ENCODE measurements at regions of chr17 and their contacts with region 1.

Region 1: DNA sequence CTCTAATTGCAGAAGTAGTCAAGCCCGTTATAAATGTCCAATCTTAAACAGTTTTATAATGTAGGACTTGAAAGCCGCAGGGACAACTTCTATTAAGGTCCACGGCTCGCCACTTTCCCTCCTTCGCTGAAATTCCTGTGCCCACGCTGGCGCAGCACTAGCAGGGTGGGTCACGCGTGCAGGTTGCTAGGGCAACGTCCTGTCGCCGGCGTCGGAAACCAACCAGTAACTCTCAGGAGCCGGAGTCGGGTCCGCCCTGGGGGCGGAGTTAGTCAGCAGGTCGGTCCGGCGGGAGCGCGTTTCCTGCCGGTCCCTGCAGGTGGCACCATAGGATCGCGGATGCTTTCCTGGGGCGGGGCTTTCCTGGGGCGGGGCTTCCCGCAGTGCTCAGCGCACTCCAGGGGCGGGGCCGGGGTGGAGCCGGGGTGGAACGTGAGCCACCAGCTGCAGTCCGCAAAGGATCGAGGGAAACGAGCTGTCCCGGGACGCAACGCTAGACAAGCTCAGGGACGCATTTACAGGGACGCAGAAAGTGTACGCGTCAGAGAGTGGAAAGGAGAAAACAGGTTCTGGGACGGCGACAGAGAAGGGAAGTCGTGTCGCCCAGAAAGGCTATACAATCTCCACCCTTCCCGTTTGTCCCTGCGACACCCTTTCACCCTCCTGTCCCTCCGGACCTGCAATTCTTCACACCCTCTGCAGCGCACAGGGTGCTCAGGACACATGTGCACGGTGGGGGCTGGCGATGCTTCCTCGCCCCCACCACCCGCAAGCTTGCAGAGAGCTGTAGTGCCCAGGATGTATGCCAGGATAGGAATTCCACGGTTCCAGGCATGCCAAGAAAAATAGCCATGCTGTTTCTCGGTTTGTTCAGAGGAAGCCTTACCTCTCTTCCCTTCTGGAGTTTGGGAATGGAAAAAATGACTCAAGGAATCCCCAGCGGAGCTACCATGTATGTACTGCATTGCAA is 12.4 kb downstream of the COPZ2 start:
- DNase-seq: peak; percentile 95 to 98
- ATAC-seq: peak; percentile 71 to 82
- H3K4me3 ChIP-seq: peak overlapping the region; percentile 43
- H3K27ac ChIP-seq: peak overlapping the region; percentile 71 to 88
- H3K4me1 ChIP-seq: peaks cover 27% of the 10 kb centered on the region
- CTCF ChIP-seq: peak; percentile 96
- EP300 ChIP-seq: no peak
- POLR2A ChIP-seq: peak; percentile 87
- RAD21 ChIP-seq: peak; percentile 96 to 100

Region 2: DNA sequence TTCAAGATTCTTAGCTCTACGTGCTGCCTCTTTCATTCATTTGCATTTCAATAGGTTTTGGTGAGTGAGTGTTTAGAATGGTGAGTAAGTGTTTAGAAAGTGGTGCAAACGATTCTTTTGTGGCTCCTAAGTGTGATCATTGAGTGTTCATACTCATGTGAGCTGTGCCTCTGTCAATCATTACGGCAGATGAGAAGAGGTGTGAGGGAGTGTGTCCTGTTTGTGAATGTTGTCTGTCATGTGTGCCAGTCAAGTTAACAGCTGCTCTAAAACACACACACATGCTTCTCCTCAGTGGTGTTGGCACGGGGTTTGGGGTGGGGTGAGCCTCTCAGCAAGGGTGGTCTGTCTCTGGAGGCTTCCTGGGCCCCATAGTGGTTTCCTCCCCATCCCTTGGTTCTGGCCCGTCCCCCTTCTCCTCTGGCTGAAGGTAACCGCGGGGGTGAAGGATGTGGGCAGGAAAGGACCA is 804.7 kb before region 1 on chr17:
- CTCF ChIA-PET with region 1: no interaction called
- POLR2A ChIA-PET with region 1: no interaction called
- DNase-seq: no peak
- ATAC-seq: no peak; a peak in 1 of 6 replicates
- H3K4me3 ChIP-seq: no peak overlapping the region
- H3K27ac ChIP-seq: no peak overlapping the region
- H3K4me1 ChIP-seq: peaks cover 9% of the 10 kb centered on the region
- CTCF ChIP-seq: no peak
- EP300 ChIP-seq: no peak
- POLR2A ChIP-seq: no peak
- RAD21 ChIP-seq: no peak

Region 3: GRCh38 chr17:48011405-48012150 is 13.6 kb before region 1 on chr17:
- CTCF ChIA-PET with region 1: interaction called, 45 read pairs
- POLR2A ChIA-PET with region 1: no interaction called
- DNase-seq: peak; percentile 66 to 78
- ATAC-seq: peak; percentile 83 to 87
- H3K4me3 ChIP-seq: no peak overlapping the region
- H3K27ac ChIP-seq: peak overlapping the region; percentile 10 to 34; a peak in 5 of 6 replicates
- H3K4me1 ChIP-seq: 0 out of 3 replicates have a peak, but pooled peaks cover 3% of the 10 kb centered on the region
- CTCF ChIP-seq: peak; percentile 39; the same call in 2 of the 3 replicates
- EP300 ChIP-seq: no peak
- POLR2A ChIP-seq: no peak
- RAD21 ChIP-seq: peak; percentile 23 to 61; a peak in 3 of 5 replicates

Region 4: DNA sequence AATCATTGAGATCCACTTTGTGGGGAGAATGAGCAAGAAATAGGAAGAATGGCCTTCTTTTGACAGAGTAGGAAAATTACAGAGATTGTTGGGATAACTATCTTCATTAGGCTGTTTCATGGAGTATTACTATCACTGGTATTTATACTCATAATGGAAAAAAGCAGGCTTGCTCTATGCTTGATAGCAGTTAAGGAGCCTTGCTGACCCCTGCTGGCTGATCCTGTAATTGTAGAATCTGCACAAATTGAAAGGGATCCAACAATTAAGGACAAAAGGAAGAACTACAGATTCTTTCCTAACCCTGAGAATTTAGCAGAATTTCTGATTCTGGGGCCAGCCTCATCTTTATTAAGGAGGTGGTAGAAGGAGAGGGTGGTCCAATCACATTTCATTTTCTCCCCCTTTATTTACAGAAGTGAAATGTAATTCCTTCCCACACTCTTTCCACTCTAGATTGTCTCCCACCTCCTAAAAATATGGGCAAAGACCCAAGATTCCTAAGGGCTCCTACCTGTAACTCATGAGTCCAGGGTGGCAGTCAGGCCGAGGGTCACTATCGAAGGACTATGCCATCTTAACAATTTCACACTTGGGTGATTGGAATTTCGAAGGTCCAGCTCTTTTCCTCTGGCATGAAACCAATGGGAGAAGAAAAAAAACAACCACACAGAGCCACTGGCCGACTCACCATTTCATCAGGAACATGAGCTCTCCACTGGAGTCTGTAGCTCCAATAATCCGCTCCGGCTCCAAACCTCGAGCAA is 49.3 kb after region 1 on chr17:
- CTCF ChIA-PET with region 1: interaction called, 1,398 read pairs
- POLR2A ChIA-PET with region 1: interaction called, 6 read pairs
- DNase-seq: peak; percentile 72 to 80
- ATAC-seq: peak; percentile 91 to 92
- H3K4me3 ChIP-seq: no peak overlapping the region
- H3K27ac ChIP-seq: no peak overlapping the region
- H3K4me1 ChIP-seq: no peaks in the 10 kb centered on the region
- CTCF ChIP-seq: peak; percentile 96
- EP300 ChIP-seq: no peak
- POLR2A ChIP-seq: no peak
- RAD21 ChIP-seq: peak; percentile 83 to 88

Region 5: GRCh38 chr17:48113201-48113676 is 88.0 kb after region 1 on chr17:
- CTCF ChIA-PET with region 1: interaction called, 54 read pairs
- POLR2A ChIA-PET with region 1: no interaction called
- DNase-seq: no peak
- ATAC-seq: no peak
- H3K4me3 ChIP-seq: no peak overlapping the region
- H3K27ac ChIP-seq: no peak overlapping the region
- H3K4me1 ChIP-seq: peaks cover 9% of the 10 kb centered on the region
- CTCF ChIP-seq: no peak
- EP300 ChIP-seq: no peak
- POLR2A ChIP-seq: no peak
- RAD21 ChIP-seq: no peak

Region 6: GRCh38 chr17:48593840-48594537 is 568.8 kb after region 1 on chr17:
- CTCF ChIA-PET with region 1: interaction called, 11 read pairs
- POLR2A ChIA-PET with region 1: no interaction called
- DNase-seq: peak; percentile 81 to 94
- ATAC-seq: peak; percentile 74 to 92
- H3K4me3 ChIP-seq: peak overlapping the region; percentile 22; the same call in 2 of the 3 replicates
- H3K27ac ChIP-seq: peak overlapping the region in 1 of 2 experiments; percentile 60; a peak in 4 of 6 replicates
- H3K4me1 ChIP-seq: peaks cover 5% of the 10 kb centered on the region
- CTCF ChIP-seq: peak; percentile 99
- EP300 ChIP-seq: no peak
- POLR2A ChIP-seq: no peak
- RAD21 ChIP-seq: peak; percentile 91 to 94